CD8-positive, alpha-beta T cell (primary cell): ENCODE measurements at regions of chr19 and their contacts with region 1.

Region 1: DNA sequence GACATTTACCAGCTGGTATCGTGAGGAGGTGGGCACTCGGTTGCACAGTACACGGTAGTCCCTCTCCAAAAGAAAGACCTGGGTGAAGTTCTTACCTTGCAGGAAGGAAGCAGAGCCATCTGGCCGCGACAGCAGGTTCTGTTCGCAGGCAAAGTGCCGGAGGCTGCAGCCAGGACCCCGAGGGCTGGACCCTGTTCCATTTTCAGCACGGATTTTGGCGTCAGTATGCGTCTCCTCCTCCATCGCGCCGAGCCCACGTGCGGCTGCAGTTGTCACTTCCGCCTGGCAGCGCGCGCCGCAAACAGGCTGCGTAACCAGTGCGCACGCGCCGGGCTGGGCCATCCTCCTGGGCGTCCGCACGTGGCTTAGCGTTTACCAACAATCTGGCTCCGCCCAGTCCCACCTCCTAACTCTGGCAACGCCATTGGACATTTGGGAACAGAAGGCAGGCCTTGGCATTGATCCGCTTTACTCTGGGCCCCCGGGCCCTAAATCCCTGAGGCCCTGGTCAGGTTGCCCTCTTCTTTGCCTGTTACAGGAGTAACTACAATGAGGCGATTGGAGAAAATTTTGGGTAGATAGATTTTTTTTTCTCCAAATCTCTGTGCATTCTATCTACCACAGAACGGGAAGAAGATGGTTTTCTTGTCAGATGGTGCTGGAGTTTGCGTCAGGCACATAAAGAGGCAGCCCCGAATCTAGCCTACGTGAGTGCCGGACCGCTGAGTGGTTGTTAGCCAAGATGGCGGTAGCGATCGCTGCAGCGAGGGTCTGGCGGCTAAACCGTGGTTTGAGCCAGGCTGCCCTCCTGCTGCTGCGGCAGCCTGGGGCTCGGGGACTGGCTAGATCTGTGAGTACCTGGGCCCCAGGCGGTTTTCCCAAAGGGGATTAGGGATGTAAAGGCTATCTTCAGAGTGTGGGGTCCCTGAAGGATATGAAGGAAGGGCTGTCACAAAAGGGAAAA is at the starts of genes BCKDHA and EXOSC5:
- DNase-seq: peak; percentile 97 to 100 (median 99)
- ATAC-seq: peak; percentile 97
- H3K4me3 ChIP-seq: peak within 1 kb of the TSS; percentile 84 to 97
- H3K4me3 Mint-ChIP-seq: peak within 1 kb of the TSS; percentile 98
- H3K27ac ChIP-seq: peak within 1 kb of the TSS; percentile 98
- H3K27ac Mint-ChIP-seq: peak within 1 kb of the TSS; percentile 100
- H3K4me1 ChIP-seq: peaks cover 28% of the 10 kb centered on the region
- H3K4me1 Mint-ChIP-seq: peaks cover 47% of the 10 kb centered on the region
- H3K27me3 ChIP-seq: no peaks in the 10 kb centered on the region
- H3K27me3 Mint-ChIP-seq: no peaks in the 10 kb centered on the region
- CTCF ChIP-seq: no peak
- total RNA-seq, gene BCKDHA: 19.4 to 20.5 TPM
- total RNA-seq, gene EXOSC5: 4.1 to 5.5 TPM

Region 2: DNA sequence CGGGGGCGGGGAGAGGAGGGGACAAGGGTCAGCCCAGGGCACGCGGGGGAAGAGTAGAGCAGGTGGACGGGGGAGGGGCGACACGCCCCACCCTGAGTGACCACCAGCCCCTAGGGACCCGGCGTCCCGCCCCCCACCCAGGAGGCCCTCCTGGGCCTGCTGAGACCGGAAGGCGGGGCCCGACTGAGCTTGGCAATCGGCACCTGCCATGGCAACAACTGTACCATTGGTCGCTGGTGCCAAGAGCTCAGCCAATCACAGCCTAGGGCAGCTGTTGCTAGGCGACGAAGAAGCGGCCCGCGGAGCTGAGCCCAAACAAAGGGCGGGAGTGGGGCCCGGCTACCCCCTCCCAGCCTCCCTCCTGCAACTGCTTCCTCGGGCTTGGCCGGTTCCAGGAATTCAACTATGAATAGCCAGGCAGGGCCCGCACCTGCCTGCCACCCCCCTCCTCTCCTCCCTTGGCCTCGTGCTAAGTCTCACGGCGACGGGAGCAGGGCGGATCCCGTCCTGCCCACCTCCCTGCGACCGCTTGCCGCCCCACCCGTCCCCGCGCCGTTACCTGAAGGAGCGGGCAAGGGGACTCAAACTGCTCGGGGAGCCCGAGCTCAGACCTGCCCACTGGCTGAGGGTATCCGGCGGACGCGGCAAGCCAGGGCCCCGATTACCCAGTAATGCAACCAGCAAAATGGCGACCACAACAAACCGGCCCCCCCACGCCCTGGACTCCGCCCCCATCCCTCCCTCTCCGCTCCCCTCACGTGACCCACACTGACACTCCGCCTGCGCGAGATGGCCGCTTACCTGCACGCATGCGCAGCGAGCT is 1563.7 kb before region 1 on chr19 and contains the start of gene DYRK1B:
- CTCF ChIA-PET with region 1: no interaction called
- POLR2A ChIA-PET with region 1: no interaction called
- intact Hi-C with region 1: loop called in 1 of 2 experiments (anchors 5 kb)
- DNase-seq: peak; percentile 97 to 99 (median 98)
- ATAC-seq: peak; percentile 84
- H3K4me3 ChIP-seq: peak within 1 kb of the TSS; percentile 93 to 99
- H3K4me3 Mint-ChIP-seq: peak within 1 kb of the TSS; percentile 75
- H3K27ac ChIP-seq: peak within 1 kb of the TSS; percentile 96 to 99
- H3K27ac Mint-ChIP-seq: peak within 1 kb of the TSS; percentile 90
- H3K4me1 ChIP-seq: peaks cover 23% of the 10 kb centered on the region
- H3K4me1 Mint-ChIP-seq: peaks cover 28% of the 10 kb centered on the region
- H3K27me3 ChIP-seq: no peaks in the 10 kb centered on the region
- H3K27me3 Mint-ChIP-seq: no peaks in the 10 kb centered on the region
- CTCF ChIP-seq: no peak
- total RNA-seq, gene DYRK1B: 19.0 to 22.6 TPM

Region 3: GRCh38 chr19:40716655-40717324 is 680.6 kb before region 1 on chr19 and contains the starts of genes COQ8B and ITPKC:
- CTCF ChIA-PET with region 1: no interaction called
- POLR2A ChIA-PET with region 1: no interaction called
- intact Hi-C with region 1: loop called in 1 of 2 experiments (anchors 10 kb)
- DNase-seq: peak; percentile 98 to 100 (median 100)
- ATAC-seq: peak; percentile 74
- H3K4me3 ChIP-seq: peak within 1 kb of the TSS; percentile 66 to 93
- H3K4me3 Mint-ChIP-seq: peak within 1 kb of the TSS; percentile 88
- H3K27ac ChIP-seq: peak within 1 kb of the TSS; percentile 88 to 89
- H3K27ac Mint-ChIP-seq: peak within 1 kb of the TSS; percentile 97
- H3K4me1 ChIP-seq: peaks cover 61% of the 10 kb centered on the region
- H3K4me1 Mint-ChIP-seq: peaks cover 70% of the 10 kb centered on the region
- H3K27me3 ChIP-seq: no peaks in the 10 kb centered on the region
- H3K27me3 Mint-ChIP-seq: no peaks in the 10 kb centered on the region
- CTCF ChIP-seq: no peak
- total RNA-seq, gene COQ8B: 14.0 to 14.2 TPM
- total RNA-seq, gene ITPKC: 5.9 to 6.4 TPM

Region 4: DNA sequence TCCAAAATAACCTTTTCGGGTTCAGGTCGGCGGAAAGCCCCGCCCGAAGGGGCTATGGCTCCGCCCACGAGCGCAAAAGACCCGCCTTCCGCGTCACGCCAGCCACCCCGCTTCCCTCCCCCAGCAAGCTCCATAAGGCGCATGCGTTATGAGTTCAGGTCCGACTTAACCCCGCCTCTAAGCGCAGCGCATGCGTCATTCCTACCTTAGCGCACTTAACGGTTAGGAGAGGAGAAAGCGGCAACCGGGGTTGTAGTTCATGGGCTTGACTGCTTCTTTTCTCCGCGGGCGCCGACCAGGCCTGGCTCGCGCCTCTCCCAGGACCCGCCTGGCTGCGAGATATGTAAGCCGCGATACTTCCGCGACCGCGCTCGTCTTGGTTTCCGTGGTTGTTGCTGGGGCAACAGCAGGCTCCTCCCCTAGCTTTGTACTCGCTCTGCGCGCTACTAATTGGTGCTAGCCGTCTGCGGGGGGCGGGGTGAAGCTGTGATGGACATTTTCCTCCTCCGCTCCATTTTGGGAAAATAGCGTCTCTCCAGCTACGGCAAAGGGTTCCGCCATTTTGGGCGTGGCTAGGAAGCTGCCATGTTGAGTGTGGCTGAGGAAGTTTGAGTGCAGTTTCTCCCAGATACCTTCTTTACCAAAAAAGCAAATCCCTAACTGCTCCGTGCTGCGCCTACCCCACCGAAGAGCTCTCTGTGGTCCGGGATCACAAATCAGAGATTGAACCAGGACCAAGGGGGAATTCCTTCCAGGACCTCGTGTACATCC is 33.4 kb before region 1 on chr19 and contains the start of gene B9D2:
- CTCF ChIA-PET with region 1: interaction called, 4 read pairs
- POLR2A ChIA-PET with region 1: interaction called, 6 read pairs
- intact Hi-C with region 1: loop called (anchors 1 kb)
- DNase-seq: peak; percentile 95 to 99 (median 98)
- ATAC-seq: peak; percentile 89
- H3K4me3 ChIP-seq: peak within 1 kb of the TSS; percentile 80 to 81
- H3K4me3 Mint-ChIP-seq: peak within 1 kb of the TSS; percentile 98
- H3K27ac ChIP-seq: peak within 1 kb of the TSS; percentile 99 to 100
- H3K27ac Mint-ChIP-seq: peak within 1 kb of the TSS; percentile 100
- H3K4me1 ChIP-seq: peaks cover 27% of the 10 kb centered on the region
- H3K4me1 Mint-ChIP-seq: peaks cover 30% of the 10 kb centered on the region
- H3K27me3 ChIP-seq: no peaks in the 10 kb centered on the region
- H3K27me3 Mint-ChIP-seq: no peaks in the 10 kb centered on the region
- CTCF ChIP-seq: no peak
- total RNA-seq, gene B9D2: 19.6 to 25.9 TPM

Region 5: GRCh38 chr19:41439441-41440222 is 42.3 kb after region 1 on chr19 and contains the start of gene DMAC2:
- CTCF ChIA-PET with region 1: interaction called, 3 read pairs
- POLR2A ChIA-PET with region 1: interaction called, 3 read pairs
- intact Hi-C with region 1: loop called (anchors 1 kb)
- DNase-seq: peak; percentile 86 to 97 (median 93)
- ATAC-seq: peak; percentile 99
- H3K4me3 ChIP-seq: peak within 1 kb of the TSS; percentile 80 to 98
- H3K4me3 Mint-ChIP-seq: peak within 1 kb of the TSS; percentile 54
- H3K27ac ChIP-seq: peak within 1 kb of the TSS; percentile 66 to 93
- H3K27ac Mint-ChIP-seq: no peak within 1 kb of the TSS
- H3K4me1 ChIP-seq: peaks cover 11% of the 10 kb centered on the region
- H3K4me1 Mint-ChIP-seq: peaks cover 10% of the 10 kb centered on the region
- H3K27me3 ChIP-seq: no peaks in the 10 kb centered on the region
- H3K27me3 Mint-ChIP-seq: peaks cover 12% of the 10 kb centered on the region
- CTCF ChIP-seq: peak; percentile 60
- total RNA-seq, gene DMAC2: 23.2 to 25.7 TPM

Region 6: GRCh38 chr19:41541990-41542584 is 144.7 kb after region 1 on chr19:
- CTCF ChIA-PET with region 1: no interaction called
- POLR2A ChIA-PET with region 1: no interaction called
- intact Hi-C with region 1: loop called in 1 of 2 experiments (anchors 5 kb)
- DNase-seq: peak; percentile 55 to 89 (median 83)
- ATAC-seq: no peak
- H3K4me3 ChIP-seq: no peak overlapping the region
- H3K4me3 Mint-ChIP-seq: no peak overlapping the region
- H3K27ac ChIP-seq: no peak overlapping the region
- H3K27ac Mint-ChIP-seq: no peak overlapping the region
- H3K4me1 ChIP-seq: peaks cover 46% of the 10 kb centered on the region
- H3K4me1 Mint-ChIP-seq: peaks cover 43% of the 10 kb centered on the region
- H3K27me3 ChIP-seq: no peaks in the 10 kb centered on the region
- H3K27me3 Mint-ChIP-seq: peaks cover 4% of the 10 kb centered on the region
- CTCF ChIP-seq: peak; percentile 73

Region 7: GRCh38 chr19:41597600-41598041 is 200.3 kb after region 1 on chr19:
- CTCF ChIA-PET with region 1: no interaction called
- POLR2A ChIA-PET with region 1: no interaction called
- intact Hi-C with region 1: loop called in 1 of 2 experiments (anchors 2 kb)
- DNase-seq: peak; percentile 52 to 84 (median 73)
- ATAC-seq: peak; percentile 86
- H3K4me3 ChIP-seq: no peak overlapping the region
- H3K4me3 Mint-ChIP-seq: no peak overlapping the region
- H3K27ac ChIP-seq: no peak overlapping the region
- H3K27ac Mint-ChIP-seq: no peak overlapping the region
- H3K4me1 ChIP-seq: no peaks in the 10 kb centered on the region
- H3K4me1 Mint-ChIP-seq: peaks cover 6% of the 10 kb centered on the region
- H3K27me3 ChIP-seq: no peaks in the 10 kb centered on the region
- H3K27me3 Mint-ChIP-seq: peaks cover 42% of the 10 kb centered on the region
- CTCF ChIP-seq: peak; percentile 92